ENCODE measurements at regions of chr6 and their contacts with region 1.

Region 1: DNA sequence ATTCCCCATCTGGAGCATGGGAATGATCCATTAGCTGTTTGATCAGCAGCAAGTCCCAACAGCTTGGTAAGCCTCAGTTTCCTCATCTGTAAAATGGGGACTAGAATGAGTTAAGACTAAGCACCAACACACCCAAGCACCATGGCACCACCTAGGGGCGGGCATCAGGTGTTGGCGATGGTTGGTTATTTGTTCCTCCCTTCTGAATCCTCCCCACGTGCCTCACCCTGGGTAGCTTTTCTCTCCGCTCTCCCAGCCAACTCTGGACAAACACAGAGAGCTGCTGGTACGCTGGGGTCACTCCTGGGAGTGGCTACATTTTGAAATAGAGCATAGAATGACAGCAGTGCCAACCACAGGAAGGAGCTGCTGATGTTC is 13.3 kb upstream of the ITPR3 start:
- DNase-seq: no peak
- ATAC-seq: peak; percentile 95
- H3K4me3 ChIP-seq: no peak overlapping the region
- H3K27ac ChIP-seq: no peak overlapping the region
- H3K4me1 ChIP-seq: no peaks in the 10 kb centered on the region
- H3K27me3 ChIP-seq: no peaks in the 10 kb centered on the region; a peak in 1 of 4 replicates
- CTCF ChIP-seq: peak; percentile 68 to 71 (median 69)
- EP300 ChIP-seq: no peak
- POLR2A ChIP-seq: no peak
- RAD21 ChIP-seq: peak; percentile 59

Region 2: GRCh38 chr6:33430991-33431879 is 176.5 kb before region 1 on chr6:
- CTCF ChIA-PET with region 1: interaction called, 9 read pairs
- POLR2A ChIA-PET with region 1: no interaction called
- RAD21 ChIA-PET with region 1: interaction called, 10 read pairs
- SMC1A ChIA-PET with region 1: no interaction called
- in situ Hi-C with region 1: no loop called
- intact Hi-C with region 1: no loop called
- DNase-seq: no peak
- ATAC-seq: peak; percentile 85
- H3K4me3 ChIP-seq: peak overlapping the region; percentile 80
- H3K27ac ChIP-seq: peak overlapping the region; percentile 36; the same call in 1 of the 2 replicates
- H3K4me1 ChIP-seq: peaks cover 47% of the 10 kb centered on the region
- H3K27me3 ChIP-seq: no peaks in the 10 kb centered on the region
- CTCF ChIP-seq: no peak
- EP300 ChIP-seq: no peak
- POLR2A ChIP-seq: no peak
- RAD21 ChIP-seq: no peak

Region 3: DNA sequence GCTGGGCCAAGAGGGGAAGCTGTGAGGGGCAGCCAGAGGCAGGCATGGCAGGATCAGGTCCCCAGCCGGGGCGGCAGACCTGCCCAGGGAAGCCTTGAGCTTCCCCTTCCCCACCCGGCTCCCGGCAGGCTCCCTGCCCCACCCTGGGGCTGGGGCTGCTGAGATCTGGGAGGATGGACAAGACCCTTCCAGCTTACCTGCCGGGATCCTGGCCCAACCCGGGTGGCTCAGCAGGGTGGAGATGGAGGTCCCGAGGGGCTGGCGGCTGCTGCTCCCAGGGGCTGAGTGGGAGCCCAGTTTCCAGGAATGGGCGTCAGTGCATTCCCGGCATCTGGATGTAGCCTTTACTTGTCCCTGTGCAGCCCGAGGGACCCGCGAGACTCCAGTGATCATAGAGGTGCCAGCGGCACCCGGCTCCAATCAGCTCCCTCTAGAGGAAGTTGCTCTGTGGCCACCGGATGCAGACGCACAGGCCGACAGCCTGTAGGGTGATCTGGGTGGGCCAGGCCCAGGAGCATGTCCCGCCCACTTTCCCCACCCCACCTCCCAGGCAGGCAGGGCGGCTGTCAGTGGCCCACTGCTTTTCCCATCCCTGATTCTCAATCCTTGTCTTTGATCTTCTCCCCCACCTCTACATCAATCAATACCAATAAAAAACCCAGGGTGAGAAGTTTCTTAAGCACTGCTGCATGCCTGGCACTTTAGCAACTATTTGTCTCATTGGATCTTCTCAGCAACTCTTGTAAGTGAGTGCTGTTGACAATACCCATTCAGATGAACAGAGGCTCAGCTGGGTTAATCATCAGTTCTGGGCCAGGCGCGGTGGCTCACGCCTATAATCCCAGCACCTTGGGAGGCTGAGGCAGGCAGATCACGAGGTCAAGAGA is 27.7 kb before region 1 on chr6 and contains the start of gene BAK1:
- CTCF ChIA-PET with region 1: interaction called, 235 read pairs
- POLR2A ChIA-PET with region 1: no interaction called
- RAD21 ChIA-PET with region 1: interaction called, 86 read pairs
- SMC1A ChIA-PET with region 1: interaction called, 122 read pairs
- in situ Hi-C with region 1: no loop called
- intact Hi-C with region 1: no loop called
- DNase-seq: peak; percentile 56
- ATAC-seq: peak; percentile 93
- H3K4me3 ChIP-seq: peak within 1 kb of the TSS; percentile 93
- H3K27ac ChIP-seq: peak within 1 kb of the TSS; percentile 95
- H3K4me1 ChIP-seq: peaks cover 16% of the 10 kb centered on the region
- H3K27me3 ChIP-seq: no peaks in the 10 kb centered on the region
- CTCF ChIP-seq: peak; percentile 41 to 57 (median 54); a peak in 5 of 6 replicates
- EP300 ChIP-seq: no peak
- POLR2A ChIP-seq: peak; percentile 76
- RAD21 ChIP-seq: 0 out of 2 replicates have a peak, but pooled peaks have one; percentile 22
- polyA plus RNA-seq, gene BAK1: 6.3 to 13.0 TPM

Region 4: DNA sequence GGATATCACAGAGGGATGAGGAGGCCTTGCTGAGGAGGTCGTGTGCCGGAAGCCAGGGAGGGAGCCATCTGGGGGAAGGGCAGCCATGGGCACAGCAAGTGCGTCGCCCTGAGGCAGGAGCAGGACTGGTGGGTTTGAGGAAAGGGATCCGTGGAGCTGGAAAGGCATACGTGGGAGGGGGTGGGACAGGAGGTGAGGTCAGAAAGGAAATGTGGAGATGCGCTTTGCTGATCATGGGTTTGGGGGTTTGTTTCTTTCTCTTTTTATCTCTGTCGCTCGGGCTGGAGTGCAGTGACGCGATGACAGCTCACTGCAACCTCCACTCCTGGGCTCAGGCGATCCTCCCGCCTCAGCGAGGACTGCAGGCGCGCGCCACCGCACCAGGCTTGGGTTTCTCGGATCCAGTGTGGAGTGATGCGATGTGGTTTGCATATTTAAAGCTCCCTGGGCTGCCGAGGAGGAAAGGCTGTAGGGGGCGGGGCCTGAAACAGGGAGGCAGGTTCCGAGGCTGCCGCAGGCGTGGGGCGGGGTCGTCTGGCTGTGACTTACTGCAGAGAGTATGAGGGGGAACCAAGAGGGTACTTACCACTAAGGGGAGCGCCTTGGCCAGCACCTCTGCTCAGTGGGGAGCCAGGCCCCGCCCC is 15.2 kb before region 1 on chr6:
- CTCF ChIA-PET with region 1: interaction called, 235 read pairs
- POLR2A ChIA-PET with region 1: interaction called, 11 read pairs
- RAD21 ChIA-PET with region 1: interaction called, 86 read pairs
- SMC1A ChIA-PET with region 1: interaction called, 122 read pairs
- in situ Hi-C with region 1: no loop called
- intact Hi-C with region 1: loop called (anchors 1 kb)
- DNase-seq: peak; percentile 63
- ATAC-seq: peak; percentile 59
- H3K4me3 ChIP-seq: peak overlapping the region; percentile 46; the same call in 1 of the 2 replicates
- H3K27ac ChIP-seq: peak overlapping the region; percentile 23
- H3K4me1 ChIP-seq: peaks cover 44% of the 10 kb centered on the region
- H3K27me3 ChIP-seq: no peaks in the 10 kb centered on the region
- CTCF ChIP-seq: no peak
- EP300 ChIP-seq: no peak
- POLR2A ChIP-seq: no peak; the same call in 1 of the 2 replicates
- RAD21 ChIP-seq: no peak

Region 5: DNA sequence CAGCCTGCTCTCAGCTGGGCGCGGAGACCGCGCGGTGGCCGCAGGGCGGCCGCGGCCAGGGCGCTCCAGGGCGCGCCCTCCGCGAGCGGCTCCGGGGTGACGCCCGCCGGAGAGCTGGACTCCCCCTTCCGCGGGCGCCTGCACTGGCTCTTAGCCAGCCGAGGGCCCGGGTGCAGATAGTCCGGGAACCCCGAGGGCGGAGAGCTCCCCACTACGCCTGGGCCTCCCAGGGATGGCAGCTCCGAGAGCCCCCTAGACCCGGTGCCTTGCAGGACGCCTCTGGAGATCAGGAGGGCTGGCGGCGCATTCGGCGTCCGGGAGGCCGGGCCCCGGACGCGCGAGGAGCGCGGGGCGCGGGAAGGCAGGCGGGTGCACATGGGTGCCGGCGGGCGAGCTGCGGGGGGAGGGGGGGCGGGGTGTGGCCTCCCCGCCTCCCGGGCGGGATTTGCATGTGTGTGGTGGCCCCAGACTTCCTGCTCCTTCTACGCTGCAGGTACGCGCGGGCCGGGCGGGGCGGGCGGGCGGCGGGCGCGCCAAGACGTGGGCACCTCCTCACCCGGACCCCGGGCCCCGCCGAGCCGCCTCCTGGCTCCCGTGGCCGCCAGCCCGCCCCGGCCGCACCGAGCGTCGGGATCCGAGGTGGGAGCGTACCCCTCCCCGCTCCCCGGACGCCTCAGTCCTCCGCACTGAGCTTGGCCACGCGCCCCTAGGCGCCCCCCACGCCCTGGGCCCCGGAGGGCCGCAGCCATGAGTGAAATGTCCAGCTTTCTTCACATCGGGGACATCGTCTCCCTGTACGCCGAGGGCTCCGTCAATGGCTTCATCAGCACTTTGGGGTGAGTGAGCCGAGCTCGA is 13.3 kb after region 1 on chr6 and contains the start of gene ITPR3:
- CTCF ChIA-PET with region 1: interaction called, 31 read pairs
- POLR2A ChIA-PET with region 1: interaction called, 4 read pairs
- RAD21 ChIA-PET with region 1: interaction called, 19 read pairs
- SMC1A ChIA-PET with region 1: interaction called, 20 read pairs
- in situ Hi-C with region 1: no loop called
- intact Hi-C with region 1: no loop called
- DNase-seq: peak; percentile 28
- ATAC-seq: peak; percentile 80
- H3K4me3 ChIP-seq: peak within 1 kb of the TSS; percentile 86
- H3K27ac ChIP-seq: peak within 1 kb of the TSS; percentile 88
- H3K4me1 ChIP-seq: peaks cover 14% of the 10 kb centered on the region
- H3K27me3 ChIP-seq: no peaks in the 10 kb centered on the region
- CTCF ChIP-seq: no peak
- EP300 ChIP-seq: no peak
- POLR2A ChIP-seq: peak; percentile 72
- RAD21 ChIP-seq: no peak
- polyA plus RNA-seq, gene ITPR3: 0.32 to 0.44 TPM

Region 6: GRCh38 chr6:33700391-33701050 is 92.7 kb after region 1 on chr6:
- CTCF ChIA-PET with region 1: interaction called, 12 read pairs
- POLR2A ChIA-PET with region 1: no interaction called
- RAD21 ChIA-PET with region 1: interaction called, 7 read pairs
- SMC1A ChIA-PET with region 1: interaction called, 15 read pairs
- in situ Hi-C with region 1: no loop called
- intact Hi-C with region 1: no loop called
- DNase-seq: no peak
- ATAC-seq: peak; percentile 94
- H3K4me3 ChIP-seq: no peak overlapping the region
- H3K27ac ChIP-seq: peak overlapping the region; percentile 24
- H3K4me1 ChIP-seq: peaks cover 20% of the 10 kb centered on the region
- H3K27me3 ChIP-seq: no peaks in the 10 kb centered on the region
- CTCF ChIP-seq: peak; percentile 85 to 89 (median 88)
- EP300 ChIP-seq: no peak
- POLR2A ChIP-seq: no peak
- RAD21 ChIP-seq: peak; percentile 75

Region 7: GRCh38 chr6:33711140-33712129 is 103.7 kb after region 1 on chr6 and contains the start of gene UQCC2:
- CTCF ChIA-PET with region 1: interaction called, 15 read pairs
- POLR2A ChIA-PET with region 1: no interaction called
- RAD21 ChIA-PET with region 1: no interaction called
- SMC1A ChIA-PET with region 1: interaction called, 5 read pairs
- in situ Hi-C with region 1: no loop called
- intact Hi-C with region 1: no loop called
- DNase-seq: peak; percentile 84
- ATAC-seq: peak; percentile 97
- H3K4me3 ChIP-seq: peak within 1 kb of the TSS; percentile 83
- H3K27ac ChIP-seq: peak within 1 kb of the TSS; percentile 98
- H3K4me1 ChIP-seq: peaks cover 28% of the 10 kb centered on the region
- H3K27me3 ChIP-seq: no peaks in the 10 kb centered on the region
- CTCF ChIP-seq: peak; percentile 66 to 87 (median 68)
- EP300 ChIP-seq: no peak
- POLR2A ChIP-seq: peak; percentile 93
- RAD21 ChIP-seq: peak; percentile 64
- polyA plus RNA-seq, gene UQCC2: 433 to 478 TPM

Measured in GM12878 (cell line).